ENCODE measurements at regions of chr15 and their contacts with region 1.

Region 1: GRCh38 chr15:81106560-81106959 is 27.5 kb upstream of the CFAP161 start:
- DNase-seq: peak; percentile 24
- H3K4me3 Mint-ChIP-seq: no peak overlapping the region
- H3K27ac Mint-ChIP-seq: no peak overlapping the region
- H3K4me1 Mint-ChIP-seq: peaks cover 22% of the 10 kb centered on the region
- H3K27me3 Mint-ChIP-seq: peaks cover 32% of the 10 kb centered on the region

Region 2: GRCh38 chr15:80455668-80456442 is 650.7 kb before region 1 on chr15:
- intact Hi-C with region 1: loop called (anchors 5 kb)
- DNase-seq: peak; percentile 25
- H3K4me3 Mint-ChIP-seq: no peak overlapping the region
- H3K27ac Mint-ChIP-seq: no peak overlapping the region
- H3K4me1 Mint-ChIP-seq: peaks cover 4% of the 10 kb centered on the region
- H3K27me3 Mint-ChIP-seq: peaks cover 7% of the 10 kb centered on the region

Region 3: GRCh38 chr15:81000624-81001151 is 105.9 kb before region 1 on chr15 and contains the start of gene TLNRD1:
- intact Hi-C with region 1: loop called (anchors 1 kb)
- DNase-seq: peak; percentile 89
- H3K4me3 Mint-ChIP-seq: peak within 1 kb of the TSS; percentile 97
- H3K27ac Mint-ChIP-seq: peak within 1 kb of the TSS; percentile 98
- H3K4me1 Mint-ChIP-seq: peaks cover 62% of the 10 kb centered on the region
- H3K27me3 Mint-ChIP-seq: peaks cover 2% of the 10 kb centered on the region
- total RNA-seq, gene TLNRD1: 30.2 and 30.8 TPM in 2 replicates

Region 4: GRCh38 chr15:81117136-81117535 is 10.6 kb after region 1 on chr15:
- intact Hi-C with region 1: no loop called
- DNase-seq: no peak
- H3K4me3 Mint-ChIP-seq: no peak overlapping the region
- H3K27ac Mint-ChIP-seq: no peak overlapping the region
- H3K4me1 Mint-ChIP-seq: no peaks in the 10 kb centered on the region
- H3K27me3 Mint-ChIP-seq: peaks cover 33% of the 10 kb centered on the region

Region 5: DNA sequence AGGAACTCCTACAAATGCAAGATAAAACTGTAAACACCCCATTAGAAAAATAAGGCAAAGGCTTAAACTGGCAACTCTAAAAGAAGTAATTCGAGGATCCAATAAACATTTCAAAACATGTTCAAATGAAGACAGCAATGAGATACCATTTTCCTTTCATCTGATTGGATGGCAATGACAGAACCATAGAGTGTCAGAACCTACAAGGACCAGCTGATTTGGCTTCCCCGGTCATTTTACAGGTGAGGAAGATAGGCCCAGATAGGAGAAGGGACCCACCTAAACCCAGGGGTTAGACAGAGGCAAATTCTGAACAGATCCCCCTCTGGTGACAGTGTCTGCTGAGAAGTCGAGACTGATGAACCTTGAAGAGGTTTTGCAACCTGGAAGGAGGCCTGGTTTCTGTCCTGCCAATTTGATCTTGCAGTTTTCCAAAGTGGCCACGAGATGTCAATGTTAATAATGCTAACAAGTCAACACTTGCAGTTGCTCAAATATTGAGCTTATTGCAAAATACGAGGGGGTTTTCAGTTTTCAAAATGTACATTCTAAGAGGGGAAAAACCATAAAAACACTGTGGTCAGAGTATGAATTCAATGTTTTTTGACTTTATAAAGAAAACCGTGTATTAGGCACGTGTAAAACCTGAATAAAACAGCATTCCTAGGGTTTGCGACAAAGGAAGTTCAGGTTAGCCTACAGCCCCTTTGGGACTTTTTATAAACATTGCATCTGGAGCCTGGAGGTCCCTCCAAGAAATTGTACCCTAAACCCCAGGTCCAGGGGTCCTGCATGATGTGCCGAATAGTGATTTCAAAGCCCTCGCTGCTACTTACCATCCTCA is 49.0 kb after region 1 on chr15:
- intact Hi-C with region 1: loop called (anchors 5 kb)
- DNase-seq: no peak
- H3K4me3 Mint-ChIP-seq: no peak overlapping the region
- H3K27ac Mint-ChIP-seq: no peak overlapping the region
- H3K4me1 Mint-ChIP-seq: peaks cover 6% of the 10 kb centered on the region
- H3K27me3 Mint-ChIP-seq: peaks cover 17% of the 10 kb centered on the region

Region 6: GRCh38 chr15:81400640-81401236 is 294.2 kb after region 1 on chr15:
- intact Hi-C with region 1: loop called (anchors 1 kb)
- DNase-seq: no peak
- H3K4me3 Mint-ChIP-seq: no peak overlapping the region
- H3K27ac Mint-ChIP-seq: no peak overlapping the region
- H3K4me1 Mint-ChIP-seq: no peaks in the 10 kb centered on the region
- H3K27me3 Mint-ChIP-seq: peaks cover 5% of the 10 kb centered on the region